H1 (cell line): ENCODE measurements at regions of chr1 and their contacts with region 1.

Region 1: GRCh38 chr1:62144238-62144831 is 50.3 kb upstream of the L1TD1 start:
- DNase-seq: peak in 1 of 2 experiments; percentile 71
- H3K4me3 ChIP-seq: no peak overlapping the region
- H3K27ac ChIP-seq: no peak overlapping the region
- H3K4me1 ChIP-seq: peaks cover 0 to 9% (median 4%) of the 10 kb centered on the region in 4 experiments; a peak in 4 of 7 replicates
- H3K27me3 ChIP-seq: no peaks in the 10 kb centered on the region
- CTCF ChIP-seq: peak in 2 of 3 experiments; percentile 65 to 77; a peak in 3 of 4 replicates
- EP300 ChIP-seq: no peak
- POLR2A ChIP-seq: no peak
- RAD21 ChIP-seq: peak; percentile 66 to 72

Region 2: DNA sequence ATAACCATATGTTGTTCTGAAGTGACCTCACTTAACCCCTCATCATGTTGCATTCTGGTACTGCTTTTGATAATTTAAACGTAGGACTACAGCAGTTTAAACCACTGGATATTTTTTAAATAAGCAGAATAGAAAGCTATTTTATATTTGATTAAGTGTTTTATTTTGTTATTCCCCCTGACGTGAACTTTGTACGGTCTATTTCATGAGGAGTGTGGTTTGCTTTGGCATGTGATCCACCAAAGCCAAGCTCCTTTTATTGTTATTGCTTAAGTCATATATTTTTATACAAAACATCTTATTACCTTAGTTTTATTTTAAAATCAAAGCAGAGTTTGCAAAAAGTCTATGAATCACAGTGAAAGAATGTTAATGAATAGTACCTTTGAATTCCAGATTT is 51.1 kb before region 1 on chr1:
- CTCF ChIA-PET with region 1: interaction called, 12 read pairs
- POLR2A ChIA-PET with region 1: no interaction called
- DNase-seq: no peak
- H3K4me3 ChIP-seq: no peak overlapping the region
- H3K27ac ChIP-seq: no peak overlapping the region
- H3K4me1 ChIP-seq: no peaks in the 10 kb centered on the region
- H3K27me3 ChIP-seq: no peaks in the 10 kb centered on the region
- CTCF ChIP-seq: no peak
- EP300 ChIP-seq: no peak
- POLR2A ChIP-seq: no peak
- RAD21 ChIP-seq: no peak

Region 3: GRCh38 chr1:62131093-62131725 is 13.1 kb before region 1 on chr1:
- CTCF ChIA-PET with region 1: interaction called, 191 read pairs
- POLR2A ChIA-PET with region 1: interaction called, 4 read pairs
- DNase-seq: peak in 1 of 2 experiments; percentile 63
- H3K4me3 ChIP-seq: no peak overlapping the region
- H3K27ac ChIP-seq: no peak overlapping the region
- H3K4me1 ChIP-seq: no peaks in the 10 kb centered on the region
- H3K27me3 ChIP-seq: no peaks in the 10 kb centered on the region
- CTCF ChIP-seq: peak; percentile 60 to 98 (median 76)
- EP300 ChIP-seq: no peak
- POLR2A ChIP-seq: no peak
- RAD21 ChIP-seq: peak; percentile 82 to 83

Region 4: DNA sequence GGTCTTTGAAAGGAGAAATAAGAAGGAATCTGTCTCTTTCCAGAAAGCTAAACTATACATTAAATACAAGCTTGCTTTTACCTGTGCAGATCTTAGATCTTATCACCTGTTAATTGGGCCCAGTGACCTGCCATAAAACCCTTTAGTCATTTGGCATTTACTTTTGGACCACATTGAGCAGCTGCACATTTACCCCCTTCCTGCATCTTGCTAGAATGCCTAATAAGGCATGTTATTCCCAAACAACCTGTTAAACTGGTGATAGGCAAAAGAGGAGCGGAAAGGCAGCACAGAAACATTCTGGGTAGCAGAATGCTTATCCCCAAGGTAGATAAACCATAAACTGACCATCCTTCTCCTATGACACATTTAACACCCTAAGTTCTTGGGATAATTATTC is 10.4 kb after region 1 on chr1:
- CTCF ChIA-PET with region 1: interaction called, 20 read pairs
- POLR2A ChIA-PET with region 1: interaction called, 3 read pairs
- DNase-seq: no peak
- H3K4me3 ChIP-seq: no peak overlapping the region
- H3K27ac ChIP-seq: no peak overlapping the region
- H3K4me1 ChIP-seq: no peaks in the 10 kb centered on the region
- H3K27me3 ChIP-seq: no peaks in the 10 kb centered on the region
- CTCF ChIP-seq: no peak
- EP300 ChIP-seq: no peak
- POLR2A ChIP-seq: no peak
- RAD21 ChIP-seq: no peak

Region 5: GRCh38 chr1:62159940-62160348 is 15.6 kb after region 1 on chr1:
- CTCF ChIA-PET with region 1: interaction called, 20 read pairs
- POLR2A ChIA-PET with region 1: interaction called, 3 read pairs
- DNase-seq: no peak
- H3K4me3 ChIP-seq: no peak overlapping the region
- H3K27ac ChIP-seq: no peak overlapping the region
- H3K4me1 ChIP-seq: no peaks in the 10 kb centered on the region
- H3K27me3 ChIP-seq: no peaks in the 10 kb centered on the region
- CTCF ChIP-seq: no peak
- EP300 ChIP-seq: no peak
- POLR2A ChIP-seq: no peak
- RAD21 ChIP-seq: no peak

Region 6: GRCh38 chr1:62424411-62424810 is 280.1 kb after region 1 on chr1:
- CTCF ChIA-PET with region 1: interaction called, 10 read pairs
- POLR2A ChIA-PET with region 1: no interaction called
- DNase-seq: no peak
- H3K4me3 ChIP-seq: no peak overlapping the region
- H3K27ac ChIP-seq: no peak overlapping the region
- H3K4me1 ChIP-seq: peaks cover 0 to 3% (median 1%) of the 10 kb centered on the region in 4 experiments; a peak in 2 of 7 replicates
- H3K27me3 ChIP-seq: no peaks in the 10 kb centered on the region
- CTCF ChIP-seq: no peak
- EP300 ChIP-seq: no peak
- POLR2A ChIP-seq: no peak
- RAD21 ChIP-seq: no peak